GM13976 (cell line): ENCODE measurements at regions of chrX and their contacts with region 1.

Region 1: GRCh38 chrX:9677098-9677739 is 88.4 kb downstream of the GPR143 start:
- DNase-seq: peak; percentile 79
- CTCF ChIP-seq: no peak

Region 2: GRCh38 chrX:9341291-9342201 is 335.7 kb before region 1 on chrX:
- in situ Hi-C with region 1: loop called (anchors 25 kb)
- DNase-seq: peak; percentile 76
- CTCF ChIP-seq: no peak

Region 3: DNA sequence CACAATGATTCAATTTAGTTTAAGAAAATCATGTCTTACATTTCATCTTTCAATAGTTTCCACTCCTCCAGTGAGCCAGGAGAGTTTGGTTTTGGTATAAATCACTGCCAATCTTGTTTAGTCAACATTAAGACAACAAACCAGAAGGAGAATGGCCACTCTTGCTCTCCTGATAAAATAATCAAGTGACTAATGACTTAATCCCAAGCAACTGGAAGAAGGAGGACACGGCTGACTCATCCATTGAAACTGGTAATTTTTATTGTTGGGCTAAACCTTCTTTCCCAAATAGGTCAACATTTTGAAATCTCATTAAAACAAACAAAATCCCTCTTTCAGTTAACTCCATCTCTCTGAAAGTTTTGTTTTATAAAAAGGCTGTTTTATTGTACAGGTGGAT is 709.8 kb after region 1 on chrX:
- in situ Hi-C with region 1: no loop called
- DNase-seq: no peak
- CTCF ChIP-seq: no peak